HEK293 (cell line): ENCODE measurements at regions of chr12 and their contacts with region 1.

Region 1: GRCh38 chr12:8045952-8046944 is 13.7 kb downstream of the FOXJ2 start:
- H3K4me3 ChIP-seq: no peak overlapping the region
- H3K27ac ChIP-seq: no peak overlapping the region
- H3K4me1 ChIP-seq: no peaks in the 10 kb centered on the region
- CTCF ChIP-seq: peak; percentile 33; the same call in 1 of the 2 replicates

Region 2: DNA sequence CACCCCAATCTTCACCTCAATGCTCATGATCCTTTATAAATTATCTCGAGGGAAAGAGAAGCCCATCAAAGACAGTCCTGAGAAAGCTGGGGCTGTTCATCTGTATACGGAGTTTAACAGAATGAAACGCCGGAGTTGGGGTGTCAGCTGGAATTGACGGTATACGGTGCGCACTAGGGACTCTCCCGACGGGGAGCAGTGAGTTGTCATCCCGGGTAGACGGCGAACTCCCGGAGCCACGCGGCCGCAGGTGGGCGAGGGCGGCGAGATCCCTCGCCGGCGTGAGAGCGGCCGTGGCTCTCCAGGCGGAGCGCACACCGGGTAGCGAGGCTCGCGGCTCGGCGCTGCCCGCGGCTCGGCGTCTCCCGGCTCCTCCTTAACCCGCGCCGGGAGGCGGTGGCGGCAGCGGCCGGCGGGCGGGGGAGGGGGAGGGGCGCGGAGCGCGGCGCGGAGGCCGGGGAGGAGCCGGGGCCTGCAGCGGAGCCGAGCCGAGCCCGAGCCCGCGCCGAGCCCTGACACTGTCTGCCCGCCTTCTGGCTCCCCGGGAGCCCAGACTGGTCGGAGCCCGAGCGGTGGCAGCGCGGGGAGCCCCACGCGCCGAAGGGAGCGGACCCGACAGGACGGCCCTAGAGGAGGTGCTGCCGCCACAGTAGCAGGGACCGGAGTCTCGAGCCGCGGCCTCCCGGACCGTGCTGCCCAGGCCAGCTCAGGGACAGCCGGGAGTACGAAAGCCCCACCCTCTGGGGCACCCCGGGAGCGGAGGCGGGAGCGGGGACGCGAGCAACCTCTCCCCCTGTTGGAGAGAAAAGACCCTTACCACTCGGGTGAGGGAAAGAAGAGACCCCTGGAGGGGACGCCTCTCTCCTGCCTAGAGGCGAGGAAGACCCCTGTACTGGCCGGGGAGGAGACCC is 13.8 kb before region 1 on chr12 and contains the start of gene FOXJ2:
- CTCF ChIA-PET with region 1: interaction called, 29 read pairs
- POLR2A ChIA-PET with region 1: interaction called, 3 read pairs
- H3K4me3 ChIP-seq: peak within 1 kb of the TSS; percentile 95
- H3K27ac ChIP-seq: peak within 1 kb of the TSS; percentile 82
- H3K4me1 ChIP-seq: peaks cover 2% of the 10 kb centered on the region
- CTCF ChIP-seq: peak; percentile 75

Region 3: GRCh38 chr12:8057839-8058238 is 11.6 kb after region 1 on chr12:
- CTCF ChIA-PET with region 1: interaction called, 18 read pairs
- POLR2A ChIA-PET with region 1: no interaction called
- H3K4me3 ChIP-seq: no peak overlapping the region
- H3K27ac ChIP-seq: no peak overlapping the region
- H3K4me1 ChIP-seq: no peaks in the 10 kb centered on the region
- CTCF ChIP-seq: no peak

Region 4: GRCh38 chr12:8226355-8226754 is 180.1 kb after region 1 on chr12:
- CTCF ChIA-PET with region 1: interaction called, 10 read pairs
- POLR2A ChIA-PET with region 1: no interaction called
- H3K4me3 ChIP-seq: no peak overlapping the region
- H3K27ac ChIP-seq: no peak overlapping the region
- H3K4me1 ChIP-seq: no peaks in the 10 kb centered on the region
- CTCF ChIP-seq: no peak